PC-3 (cell line): ENCODE measurements at regions of chr14 and their contacts with region 1.

Region 1: DNA sequence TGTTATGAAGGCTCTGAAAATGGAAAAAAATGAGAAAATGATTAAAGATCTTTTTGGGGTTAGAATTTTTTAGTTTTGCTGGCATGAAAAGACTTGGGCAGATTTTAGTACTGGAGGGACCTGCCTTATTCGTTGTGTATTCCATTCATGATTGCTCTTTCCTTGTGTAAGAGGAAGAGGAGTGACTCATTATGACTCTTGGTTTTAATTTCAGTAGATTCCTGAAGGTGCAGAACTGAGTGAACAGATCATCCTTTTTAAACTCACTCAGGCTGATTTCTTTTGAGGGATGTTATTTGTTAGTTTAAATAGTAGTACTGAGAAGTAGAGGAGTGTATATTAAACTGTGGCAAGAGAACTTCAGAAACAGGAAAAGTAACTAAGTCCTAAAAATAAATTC is 41.6 kb downstream of the AKAP6 start:
- DNase-seq: peak; percentile 89
- ATAC-seq: peak; percentile 82
- H3K4me3 ChIP-seq: peak overlapping the region; percentile 36; the same call in 1 of the 2 replicates
- H3K27ac ChIP-seq: peak overlapping the region; percentile 81
- H3K4me1 ChIP-seq: peaks cover 59% of the 10 kb centered on the region
- H3K27me3 ChIP-seq: no peaks in the 10 kb centered on the region
- CTCF ChIP-seq: no peak

Region 2: GRCh38 chr14:32307881-32308582 is 62.7 kb before region 1 on chr14:
- CTCF ChIA-PET with region 1: no interaction called
- POLR2A ChIA-PET with region 1: no interaction called
- intact Hi-C with region 1: loop called (anchors 1 kb)
- DNase-seq: peak; percentile 77
- ATAC-seq: peak; percentile 88
- H3K4me3 ChIP-seq: peak overlapping the region; percentile 7; the same call in 1 of the 2 replicates
- H3K27ac ChIP-seq: peak overlapping the region; percentile 68
- H3K4me1 ChIP-seq: peaks cover 23% of the 10 kb centered on the region
- H3K27me3 ChIP-seq: no peaks in the 10 kb centered on the region
- CTCF ChIP-seq: no peak

Region 3: GRCh38 chr14:32430326-32430725 is 59.6 kb after region 1 on chr14:
- CTCF ChIA-PET with region 1: no interaction called
- POLR2A ChIA-PET with region 1: no interaction called
- intact Hi-C with region 1: no loop called
- DNase-seq: peak; percentile 85
- ATAC-seq: peak; percentile 86
- H3K4me3 ChIP-seq: no peak overlapping the region
- H3K27ac ChIP-seq: peak overlapping the region; percentile 51
- H3K4me1 ChIP-seq: peaks cover 25% of the 10 kb centered on the region
- H3K27me3 ChIP-seq: no peaks in the 10 kb centered on the region
- CTCF ChIP-seq: no peak